ENCODE measurements at regions of chr17 and their contacts with region 1.

Region 1: GRCh38 chr17:29568331-29569244 is at the start of gene TP53I13:
- DNase-seq: peak; percentile 80 to 91 (median 87)
- H3K4me3 ChIP-seq: peak within 1 kb of the TSS; percentile 53 to 91 (median 77)
- H3K27ac ChIP-seq: peak within 1 kb of the TSS; percentile 54 to 81
- H3K4me1 ChIP-seq: peaks cover 3 to 61% (median 48%) of the 10 kb centered on the region in 4 experiments
- H3K27me3 ChIP-seq: no peaks in the 10 kb centered on the region

Region 2: GRCh38 chr17:29369831-29370735 is 198.5 kb before region 1 on chr17:
- CTCF ChIA-PET with region 1: interaction called, 11 read pairs
- POLR2A ChIA-PET with region 1: no interaction called
- DNase-seq: peak; percentile 73 to 84 (median 82)
- H3K4me3 ChIP-seq: peak overlapping the region in 1 of 7 experiments; percentile 35
- H3K27ac ChIP-seq: no peak overlapping the region
- H3K4me1 ChIP-seq: peaks cover 0 to 16% (median 12%) of the 10 kb centered on the region in 4 experiments
- H3K27me3 ChIP-seq: no peaks in the 10 kb centered on the region

Region 3: GRCh38 chr17:29533976-29534375 is 34.6 kb before region 1 on chr17:
- CTCF ChIA-PET with region 1: interaction called, 22 read pairs
- POLR2A ChIA-PET with region 1: no interaction called
- DNase-seq: no peak
- H3K4me3 ChIP-seq: no peak overlapping the region
- H3K27ac ChIP-seq: no peak overlapping the region
- H3K4me1 ChIP-seq: no peaks in the 10 kb centered on the region
- H3K27me3 ChIP-seq: no peaks in the 10 kb centered on the region

Region 4: DNA sequence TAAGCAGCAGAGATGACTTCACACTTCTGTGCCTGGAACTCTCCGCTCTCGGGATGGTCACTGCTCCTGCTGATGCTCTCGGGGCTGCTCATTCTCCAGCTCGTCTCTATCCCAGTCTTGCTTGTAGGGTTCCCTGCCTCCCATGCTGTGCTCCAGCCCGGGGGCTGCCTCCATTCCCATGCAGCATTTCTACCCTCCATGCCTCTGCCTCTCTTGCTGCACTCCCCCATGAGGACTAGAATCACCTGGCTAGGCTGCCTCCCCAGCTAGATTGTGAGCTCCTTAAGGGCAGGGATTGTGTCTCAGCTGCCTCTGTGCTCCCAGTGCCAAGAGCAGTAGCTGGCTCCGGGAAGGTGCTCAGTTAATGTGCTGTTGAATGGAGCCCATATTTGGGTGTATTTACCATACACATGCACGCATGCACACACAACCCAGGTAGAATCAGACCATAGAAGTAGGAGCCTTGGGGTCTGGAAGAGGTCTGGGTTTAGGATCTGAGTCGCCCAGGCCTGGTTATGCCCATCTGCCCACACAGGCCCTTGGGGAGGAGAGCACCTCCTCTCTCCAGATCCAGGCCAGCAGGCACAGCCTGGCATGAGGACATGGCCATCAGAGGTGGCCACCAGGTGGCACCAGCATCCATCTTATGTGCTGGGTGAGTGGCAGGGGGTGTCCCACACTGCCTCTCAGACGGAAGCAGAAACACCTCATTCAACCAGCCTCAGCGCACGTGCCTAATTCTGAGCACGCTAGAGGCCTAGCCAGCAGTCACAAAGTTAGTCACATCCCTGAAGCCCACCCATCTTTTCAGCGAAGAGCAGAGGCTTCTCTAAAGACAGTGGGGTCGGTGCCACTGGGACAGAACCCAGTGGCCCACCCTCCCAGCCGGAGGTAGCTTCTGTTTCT is 11.5 kb after region 1 on chr17:
- CTCF ChIA-PET with region 1: interaction called, 15 read pairs
- POLR2A ChIA-PET with region 1: no interaction called
- DNase-seq: peak; percentile 89 to 96 (median 95)
- H3K4me3 ChIP-seq: no peak overlapping the region
- H3K27ac ChIP-seq: no peak overlapping the region
- H3K4me1 ChIP-seq: peaks cover 0 to 18% (median 13%) of the 10 kb centered on the region in 4 experiments
- H3K27me3 ChIP-seq: no peaks in the 10 kb centered on the region

Region 5: DNA sequence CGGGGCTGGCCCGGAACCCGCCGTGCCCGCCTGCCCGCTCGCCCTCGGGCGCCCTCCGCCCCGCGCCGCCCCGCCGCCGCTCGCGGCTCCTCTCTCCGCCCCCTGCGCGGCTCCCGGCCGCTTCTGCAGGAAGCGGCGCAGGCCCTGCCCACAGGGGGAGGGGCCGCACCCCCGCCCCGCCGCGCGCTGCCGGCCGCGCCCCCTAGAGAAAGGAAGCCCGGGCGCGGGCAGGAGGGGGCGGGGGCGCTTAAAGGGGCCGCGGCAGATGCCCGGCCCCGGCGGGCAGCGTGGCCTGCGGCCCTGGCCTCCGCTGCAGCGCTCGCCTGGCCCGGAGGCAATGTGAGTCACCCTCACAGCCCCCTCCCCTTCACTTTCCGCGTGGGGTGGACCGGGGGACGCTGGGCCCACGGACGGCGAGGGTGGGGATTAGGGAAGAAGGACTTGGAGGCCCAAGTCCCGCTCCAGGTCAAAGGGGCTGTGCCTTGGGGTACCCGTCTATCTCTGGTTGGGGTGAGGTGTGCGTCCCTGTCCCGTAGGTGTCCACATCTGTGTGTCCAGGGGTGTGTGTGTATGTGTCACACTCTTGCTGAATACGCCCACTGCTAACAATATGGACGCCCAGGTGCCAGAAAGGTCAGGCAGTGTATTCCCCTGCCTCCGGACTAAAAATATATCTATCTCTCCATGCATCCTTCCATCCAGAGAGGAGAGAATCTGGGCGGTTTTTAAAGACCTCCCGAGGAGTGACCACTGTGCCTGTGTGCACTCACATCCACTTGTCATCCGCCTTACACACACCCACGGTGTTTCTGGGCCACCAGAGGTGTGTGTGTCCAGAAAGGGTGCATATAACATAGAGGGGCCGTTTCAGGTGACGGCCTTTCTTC is 21.2 kb after region 1 on chr17 and contains the start of gene GIT1:
- CTCF ChIA-PET with region 1: interaction called, 137 read pairs
- POLR2A ChIA-PET with region 1: interaction called, 3 read pairs
- DNase-seq: peak; percentile 81 to 90 (median 88)
- H3K4me3 ChIP-seq: peak within 1 kb of the TSS; percentile 56 to 90 (median 78)
- H3K27ac ChIP-seq: peak within 1 kb of the TSS in 1 of 2 experiments; percentile 54
- H3K4me1 ChIP-seq: peaks cover 4 to 86% (median 85%) of the 10 kb centered on the region in 4 experiments
- H3K27me3 ChIP-seq: no peaks in the 10 kb centered on the region

Region 6: DNA sequence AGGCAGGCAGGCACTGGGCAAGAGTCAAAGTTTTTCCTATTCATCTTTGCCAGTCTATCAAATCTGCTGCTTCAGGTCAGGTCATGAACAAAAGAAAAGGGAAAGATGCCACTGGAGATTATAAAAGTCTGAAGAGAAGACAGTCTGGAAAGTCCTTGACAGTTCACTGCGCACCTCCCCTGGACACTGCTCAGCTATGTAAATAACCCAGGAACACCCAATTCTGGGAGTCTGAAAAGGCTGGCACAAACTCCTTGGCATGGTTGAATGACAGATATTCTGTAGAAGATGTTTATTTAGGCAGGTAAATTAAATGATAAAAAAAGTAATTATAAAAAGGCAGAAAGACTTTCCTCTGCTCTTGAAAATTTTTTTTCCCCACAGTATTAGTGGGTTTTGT is 59.4 kb after region 1 on chr17:
- CTCF ChIA-PET with region 1: no interaction called
- POLR2A ChIA-PET with region 1: no interaction called
- DNase-seq: no peak
- H3K4me3 ChIP-seq: no peak overlapping the region
- H3K27ac ChIP-seq: no peak overlapping the region
- H3K4me1 ChIP-seq: peaks cover 0 to 8% (median 5%) of the 10 kb centered on the region in 4 experiments
- H3K27me3 ChIP-seq: peaks cover 0 to 2% (median 0%) of the 10 kb centered on the region in 5 experiments

Region 7: GRCh38 chr17:29771551-29771950 is 203.0 kb after region 1 on chr17:
- CTCF ChIA-PET with region 1: no interaction called
- POLR2A ChIA-PET with region 1: no interaction called
- DNase-seq: no peak
- H3K4me3 ChIP-seq: no peak overlapping the region
- H3K27ac ChIP-seq: no peak overlapping the region
- H3K4me1 ChIP-seq: no peaks in the 10 kb centered on the region
- H3K27me3 ChIP-seq: no peaks in the 10 kb centered on the region